ENCODE measurements at regions of chr7 and their contacts with region 1.

Region 1: DNA sequence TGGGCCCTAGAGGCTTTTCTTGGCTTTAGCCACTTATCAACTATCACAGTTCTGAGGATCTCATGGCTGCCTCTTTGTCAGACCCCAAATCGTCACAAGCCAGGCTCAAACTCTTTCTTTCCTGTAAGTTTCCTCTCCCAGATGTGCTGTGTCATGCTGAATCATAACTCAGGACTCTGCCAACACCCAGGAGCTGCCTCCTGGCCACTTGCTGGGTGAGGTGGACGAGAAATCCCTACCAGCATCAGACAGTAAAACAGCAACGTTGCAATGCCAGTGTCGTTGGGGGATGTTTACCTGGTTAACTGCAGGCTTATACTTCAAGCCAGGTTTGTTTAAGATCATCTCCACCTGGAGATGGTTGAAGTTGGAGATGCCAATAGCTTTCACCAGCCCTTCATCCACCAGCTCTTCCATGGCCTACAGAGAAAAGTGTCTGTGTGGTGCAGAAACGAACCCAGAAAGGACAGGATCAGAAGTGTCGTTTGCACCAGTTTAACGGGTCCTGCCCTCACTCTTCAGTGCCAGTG is 10.1 kb downstream of the AKR1B1 start:
- DNase-seq: no peak
- H3K4me3 ChIP-seq: no peak overlapping the region
- H3K27ac ChIP-seq: no peak overlapping the region
- H3K4me1 ChIP-seq: no peaks in the 10 kb centered on the region
- H3K27me3 ChIP-seq: no peaks in the 10 kb centered on the region
- CTCF ChIP-seq: no peak

Region 2: DNA sequence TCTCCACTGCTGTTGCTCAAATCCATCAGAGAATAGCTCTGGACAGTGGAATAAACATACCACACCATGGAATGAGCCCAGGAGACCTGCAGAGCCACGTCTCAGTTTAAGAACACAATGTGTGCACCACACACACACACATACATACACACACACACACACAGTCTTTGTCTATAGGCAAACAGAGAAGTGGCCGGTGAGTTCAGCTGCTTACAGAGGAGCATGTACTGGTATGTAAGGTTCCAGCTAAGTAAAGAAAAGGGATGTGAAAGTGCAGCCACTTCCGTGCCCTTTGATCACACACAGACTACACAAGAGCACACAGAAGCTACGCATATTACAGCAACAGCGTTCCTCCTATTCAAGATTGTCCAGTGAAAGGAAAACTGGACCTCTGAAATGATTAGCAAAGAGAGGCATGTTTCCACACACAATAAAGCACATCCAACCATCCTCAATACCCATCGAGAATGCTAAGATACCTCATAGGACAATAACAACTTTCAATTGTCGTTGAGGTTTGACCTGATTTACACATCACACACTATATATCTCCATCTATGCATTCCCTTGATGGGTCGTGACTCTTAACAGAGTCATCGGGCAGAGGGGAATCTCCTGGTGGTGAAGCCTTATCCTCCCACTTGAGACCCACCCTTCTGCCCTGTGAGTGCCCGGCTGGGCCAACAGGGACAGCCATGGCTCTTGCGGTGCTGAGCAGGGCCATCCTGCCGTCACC is 155.6 kb before region 1 on chr7:
- intact Hi-C with region 1: no loop called
- DNase-seq: peak in 1 of 2 donors; percentile 48
- H3K4me3 ChIP-seq: no peak overlapping the region
- H3K27ac ChIP-seq: no peak overlapping the region
- H3K4me1 ChIP-seq: peaks cover 0 to 14% (median 2%) of the 10 kb centered on the region in 4 donors
- H3K27me3 ChIP-seq: no peaks in the 10 kb centered on the region
- CTCF ChIP-seq: no peak

Region 3: DNA sequence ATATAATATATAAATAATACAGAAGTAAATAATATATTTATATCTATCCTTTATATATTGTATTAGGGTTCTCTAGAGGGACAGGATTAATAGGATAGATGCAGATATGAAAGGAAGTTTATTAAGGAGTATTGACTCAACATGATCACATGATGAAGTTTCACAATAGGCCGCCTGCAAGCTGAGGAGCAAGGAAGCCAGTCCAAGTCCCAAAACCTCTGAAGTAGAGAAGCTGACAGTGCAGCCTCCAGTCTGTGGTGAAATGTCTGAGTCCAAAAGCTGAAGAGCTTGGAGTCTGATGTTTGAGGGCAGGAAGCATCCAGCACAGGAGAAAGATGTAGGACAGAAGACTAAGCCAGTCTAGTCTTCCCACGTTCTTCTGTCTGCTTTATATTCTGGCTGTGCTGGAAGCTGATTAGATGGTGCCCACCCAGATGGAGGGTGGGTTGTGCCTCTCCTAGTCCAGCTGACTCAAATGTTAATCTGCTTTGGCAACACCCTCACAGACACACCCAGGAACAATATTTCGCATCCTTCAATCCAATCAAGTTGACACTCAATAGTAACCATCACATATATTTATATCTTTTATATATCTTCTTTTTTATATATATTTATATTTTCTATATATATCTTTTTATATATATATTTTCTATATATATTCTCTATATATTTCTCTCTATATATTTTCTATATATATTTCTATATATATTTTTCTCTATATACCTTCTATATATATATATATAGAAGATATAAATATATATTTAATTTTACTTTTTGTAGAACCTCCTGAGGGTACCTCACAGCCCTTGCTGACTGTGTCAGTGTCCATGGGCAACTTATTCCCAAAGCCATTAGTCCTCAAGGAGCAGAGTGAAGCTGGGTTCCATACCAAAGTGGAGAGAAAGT is 54.0 kb after region 1 on chr7:
- intact Hi-C with region 1: loop called (anchors 10 kb)
- DNase-seq: peak; percentile 74 to 84
- H3K4me3 ChIP-seq: no peak overlapping the region
- H3K27ac ChIP-seq: no peak overlapping the region
- H3K4me1 ChIP-seq: peaks cover 0 to 4% (median 0%) of the 10 kb centered on the region in 4 donors
- H3K27me3 ChIP-seq: no peaks in the 10 kb centered on the region
- CTCF ChIP-seq: no peak

Measured in tibial artery (tissue), 4 donors.